SK-N-SH (cell line): ENCODE measurements at regions of chr16 and their contacts with region 1.

Region 1: DNA sequence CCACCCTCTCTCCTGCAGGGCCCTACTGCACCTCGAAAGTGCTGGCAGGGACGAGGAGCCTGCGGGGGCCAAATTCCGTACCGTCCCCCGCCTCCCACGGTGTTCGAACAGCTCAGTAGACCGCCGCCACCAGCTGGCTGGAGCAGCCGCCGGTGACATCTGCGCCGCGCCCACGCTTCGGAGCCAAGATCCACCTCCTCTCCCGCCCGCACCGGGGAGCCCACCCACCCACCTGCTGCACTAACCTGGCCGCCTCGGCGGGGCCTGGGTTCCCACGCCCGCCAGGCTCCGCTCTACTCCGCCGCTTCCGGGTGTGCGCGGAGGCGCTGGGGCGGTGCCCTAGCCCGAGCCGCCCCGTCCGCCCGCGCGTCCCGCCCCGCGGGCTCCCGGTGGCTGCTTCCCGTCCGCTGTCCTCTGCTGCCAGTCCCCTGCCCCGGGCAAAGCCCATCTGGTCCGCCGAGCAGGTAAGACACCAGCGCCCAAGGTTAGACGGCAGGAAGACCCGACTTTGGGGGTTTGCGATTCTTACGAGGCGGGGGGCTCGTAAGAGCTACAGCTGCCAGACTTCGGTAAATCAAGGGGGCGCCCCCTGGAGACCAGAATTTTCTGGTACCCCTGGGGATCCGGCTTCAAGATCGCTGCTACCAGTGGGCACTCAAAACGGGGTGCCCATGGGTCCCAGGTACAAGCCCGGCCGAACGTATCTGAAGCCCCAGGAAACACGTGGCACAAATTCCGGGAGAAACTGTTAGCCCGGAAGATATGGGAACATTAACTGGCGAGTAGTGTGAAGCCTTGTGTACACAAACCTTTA is at the starts of genes FBXL8 and TRADD:
- DNase-seq: peak; percentile 89
- H3K4me3 ChIP-seq: peak within 1 kb of the TSS; percentile 93 to 96
- H3K27ac ChIP-seq: peak within 1 kb of the TSS; percentile 56 to 60
- H3K4me1 ChIP-seq: peaks cover 4 to 30% of the 10 kb centered on the region in 2 experiments; a peak in 1 of 4 replicates
- H3K27me3 ChIP-seq: no peaks in the 10 kb centered on the region
- CTCF ChIP-seq: peak; percentile 74
- EP300 ChIP-seq: no peak; a peak in 1 of 4 replicates
- RAD21 ChIP-seq: no peak
- polyA plus RNA-seq, gene FBXL8: 17.8 and 21.8 TPM in 2 replicates
- polyA plus RNA-seq, gene TRADD: 27.7 and 28.5 TPM in 2 replicates

Region 2: DNA sequence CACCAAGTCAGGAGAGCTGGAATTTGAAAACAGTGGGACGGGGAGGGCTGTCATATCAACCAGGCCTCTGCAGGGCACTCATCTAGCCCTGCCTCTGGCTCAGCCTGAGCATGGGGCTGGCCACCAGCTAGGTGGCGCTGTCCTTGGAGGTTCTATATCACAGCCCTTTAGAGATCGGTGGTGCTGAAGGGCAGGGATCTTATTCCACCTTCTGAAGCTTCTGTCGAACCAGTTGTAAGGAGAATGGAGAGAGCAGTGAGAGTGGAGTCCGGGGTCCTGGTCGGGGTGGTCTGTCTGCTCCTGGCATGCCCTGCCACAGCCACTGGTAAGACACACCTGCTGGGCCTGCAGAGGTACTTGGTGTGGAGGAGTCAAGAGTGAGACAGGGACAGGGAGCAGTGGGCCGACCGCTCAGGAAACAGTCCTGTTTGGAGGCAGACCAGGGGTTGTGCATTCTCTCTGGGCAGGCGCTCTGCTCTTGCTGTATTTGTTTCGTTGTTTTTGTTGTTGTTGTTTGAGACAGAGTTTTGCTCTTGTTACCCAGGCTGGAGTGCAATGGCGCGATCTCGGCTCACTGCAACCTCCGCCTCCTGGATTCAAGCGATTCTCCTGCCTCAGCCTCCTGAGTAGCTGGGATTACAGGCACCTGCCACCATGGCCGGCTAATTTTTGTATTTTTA is 198.6 kb before region 1 on chr16 and contains the start of gene CES3:
- CTCF ChIA-PET with region 1: interaction called, 82 read pairs
- POLR2A ChIA-PET with region 1: no interaction called
- DNase-seq: peak; percentile 82
- H3K4me3 ChIP-seq: peak within 1 kb of the TSS; percentile 6 to 50; a peak in 1 of 4 replicates
- H3K27ac ChIP-seq: no peak within 1 kb of the TSS; a peak in 1 of 4 replicates
- H3K4me1 ChIP-seq: peaks cover 0 to 16% of the 10 kb centered on the region in 2 experiments; a peak in 1 of 4 replicates
- H3K27me3 ChIP-seq: no peaks in the 10 kb centered on the region
- CTCF ChIP-seq: peak; percentile 81
- EP300 ChIP-seq: no peak
- RAD21 ChIP-seq: no peak
- polyA plus RNA-seq, gene CES3: 1.4 and 1.8 TPM in 2 replicates

Region 3: DNA sequence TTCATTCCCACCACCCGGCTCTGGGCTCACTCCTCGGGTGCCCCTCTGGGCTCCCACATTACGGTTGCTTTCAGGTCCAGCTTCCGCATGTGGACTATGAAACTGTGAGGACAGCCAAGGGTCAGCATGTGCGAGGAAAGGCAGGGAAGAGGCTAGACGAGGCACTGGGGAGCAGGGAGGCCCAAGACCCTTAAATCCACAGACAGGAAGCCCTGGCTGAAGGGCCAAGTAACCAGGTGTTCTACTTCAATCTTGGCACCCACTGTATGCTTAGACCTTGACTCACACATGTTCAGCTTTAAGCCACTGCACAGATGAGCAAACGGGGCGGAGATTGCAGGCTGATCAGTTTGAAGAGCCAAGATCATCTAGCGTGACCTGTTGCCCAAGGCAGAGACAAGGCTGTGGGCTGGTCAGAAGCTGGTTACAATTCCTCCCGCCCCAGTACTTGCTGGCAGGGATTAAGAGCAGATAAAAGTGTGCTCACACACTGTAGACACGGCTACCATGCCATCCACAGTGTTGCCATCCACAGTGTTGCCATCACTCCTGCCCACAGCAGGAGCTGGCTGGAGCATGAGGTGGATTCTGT is 171.5 kb before region 1 on chr16 and contains the start of gene CES4A:
- CTCF ChIA-PET with region 1: interaction called, 20 read pairs
- POLR2A ChIA-PET with region 1: no interaction called
- DNase-seq: no peak
- H3K4me3 ChIP-seq: no peak within 1 kb of the TSS
- H3K27ac ChIP-seq: no peak within 1 kb of the TSS
- H3K4me1 ChIP-seq: no peaks in the 10 kb centered on the region
- H3K27me3 ChIP-seq: no peaks in the 10 kb centered on the region
- CTCF ChIP-seq: no peak
- EP300 ChIP-seq: no peak
- RAD21 ChIP-seq: no peak
- polyA plus RNA-seq, gene CES4A: 7.3 and 13.2 TPM in 2 replicates

Region 4: GRCh38 chr16:67104061-67104460 is 55.7 kb before region 1 on chr16:
- CTCF ChIA-PET with region 1: interaction called, 33 read pairs
- POLR2A ChIA-PET with region 1: interaction called, 3 read pairs
- DNase-seq: peak; percentile 37
- H3K4me3 ChIP-seq: no peak overlapping the region
- H3K27ac ChIP-seq: no peak overlapping the region
- H3K4me1 ChIP-seq: peaks cover 0 to 8% of the 10 kb centered on the region in 2 experiments; a peak in 1 of 4 replicates
- H3K27me3 ChIP-seq: no peaks in the 10 kb centered on the region
- CTCF ChIP-seq: peak; percentile 60
- EP300 ChIP-seq: no peak
- RAD21 ChIP-seq: peak; percentile 11; the same call in 1 of the 2 replicates

Region 5: DNA sequence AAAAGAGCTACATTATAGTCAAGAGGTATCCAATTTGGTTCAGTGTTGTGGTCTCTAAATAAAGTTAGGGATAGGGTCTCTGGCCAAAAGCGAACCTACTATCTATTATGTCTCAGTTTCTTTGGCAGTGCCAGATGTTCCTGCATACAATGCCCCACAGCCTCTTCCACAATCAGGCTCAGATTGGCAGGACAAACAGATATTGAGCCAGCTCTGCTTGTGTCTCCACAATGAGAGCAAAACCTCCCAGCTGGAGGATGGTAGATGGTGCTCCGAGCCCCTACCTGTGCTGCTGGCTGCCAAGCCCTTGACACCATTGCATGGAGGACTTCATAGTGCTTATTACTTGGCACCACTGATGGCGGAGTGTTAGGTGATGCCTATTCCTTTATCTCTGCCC is 30.4 kb before region 1 on chr16:
- CTCF ChIA-PET with region 1: interaction called, 14 read pairs
- POLR2A ChIA-PET with region 1: no interaction called
- DNase-seq: no peak
- H3K4me3 ChIP-seq: no peak overlapping the region
- H3K27ac ChIP-seq: no peak overlapping the region
- H3K4me1 ChIP-seq: no peaks in the 10 kb centered on the region
- H3K27me3 ChIP-seq: no peaks in the 10 kb centered on the region
- CTCF ChIP-seq: no peak
- EP300 ChIP-seq: no peak
- RAD21 ChIP-seq: no peak

Region 6: GRCh38 chr16:67183627-67184328 is 24.0 kb after region 1 on chr16 and contains the start of gene MATCAP1:
- CTCF ChIA-PET with region 1: interaction called, 11 read pairs
- POLR2A ChIA-PET with region 1: interaction called, 11 read pairs
- DNase-seq: peak; percentile 99
- H3K4me3 ChIP-seq: peak within 1 kb of the TSS; percentile 81 to 82
- H3K27ac ChIP-seq: peak within 1 kb of the TSS; percentile 92 to 97
- H3K4me1 ChIP-seq: peaks cover 22 to 30% of the 10 kb centered on the region in 2 experiments
- H3K27me3 ChIP-seq: no peaks in the 10 kb centered on the region
- CTCF ChIP-seq: no peak
- EP300 ChIP-seq: no peak
- RAD21 ChIP-seq: no peak
- polyA plus RNA-seq, gene MATCAP1: 68.5 and 83.5 TPM in 2 replicates

Region 7: DNA sequence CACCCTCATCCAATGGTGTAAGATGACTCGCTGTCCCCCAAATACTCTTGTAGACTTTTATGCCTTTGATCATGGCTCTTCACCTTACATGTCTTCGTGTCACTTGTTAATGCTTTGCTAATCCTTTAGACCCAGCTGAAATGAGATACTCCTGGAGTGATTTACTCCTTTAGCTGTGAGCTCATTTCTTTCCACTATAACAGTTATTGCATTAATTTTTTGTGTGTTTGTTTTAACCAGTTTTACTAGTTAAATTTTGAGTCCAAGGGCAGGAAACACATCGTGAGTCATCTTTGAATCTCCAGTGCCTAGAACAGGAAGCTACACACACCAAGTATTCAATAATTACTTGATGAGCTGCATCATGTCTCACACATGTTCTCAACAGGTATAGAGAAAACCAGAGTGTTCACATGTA is 396.0 kb after region 1 on chr16:
- CTCF ChIA-PET with region 1: no interaction called
- POLR2A ChIA-PET with region 1: no interaction called
- DNase-seq: no peak
- H3K4me3 ChIP-seq: no peak overlapping the region
- H3K27ac ChIP-seq: peak overlapping the region in 1 of 2 experiments; percentile 51; a peak in 2 of 4 replicates
- H3K4me1 ChIP-seq: peaks cover under 1 to 11% of the 10 kb centered on the region in 2 experiments; a peak in 2 of 4 replicates
- H3K27me3 ChIP-seq: no peaks in the 10 kb centered on the region
- CTCF ChIP-seq: no peak
- EP300 ChIP-seq: no peak
- RAD21 ChIP-seq: no peak